Ascending aorta (tissue), 2 donors: ENCODE measurements at regions of chr17 and their contacts with region 1.

Region 1: DNA sequence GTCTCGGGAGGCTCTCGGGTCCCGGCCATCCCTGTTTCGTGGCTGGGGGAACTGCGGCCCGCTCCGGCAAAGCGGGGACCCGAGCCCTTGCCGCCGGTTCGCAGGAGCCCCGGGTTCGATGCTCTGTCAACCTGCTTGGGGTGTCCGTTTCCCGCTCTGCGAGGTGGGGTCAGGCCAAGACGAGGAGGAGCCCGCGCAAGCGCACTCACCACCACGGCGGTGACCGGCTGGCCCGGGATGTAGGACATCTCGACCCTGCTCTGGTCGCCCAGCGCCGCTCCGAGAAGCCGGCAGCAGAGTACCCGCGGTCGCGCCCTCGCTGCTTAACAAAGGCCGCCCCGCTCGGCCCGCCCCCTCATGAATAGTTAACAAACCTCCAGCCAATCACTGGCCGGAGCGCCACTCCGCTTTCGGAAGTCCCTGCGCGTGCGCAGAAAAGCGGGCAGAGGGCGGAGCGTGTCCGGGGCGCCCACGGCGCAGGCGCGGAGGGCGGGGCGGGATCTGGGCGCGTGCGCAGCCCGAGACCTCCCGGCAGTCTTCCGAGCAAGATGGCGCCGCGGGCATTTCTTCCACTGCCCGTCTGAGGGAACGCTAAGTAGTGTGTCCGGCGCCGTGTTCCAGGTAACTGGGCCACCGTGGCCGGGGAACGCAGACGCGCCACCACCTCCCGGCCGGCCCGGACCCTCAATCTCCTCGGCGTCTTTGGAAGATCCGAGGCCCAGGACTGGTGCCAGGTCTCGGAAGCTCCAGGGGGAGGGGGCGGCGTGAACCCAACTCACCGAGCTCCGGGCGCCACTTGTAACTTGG is at the starts of genes EMC6 and TAX1BP3:
- DNase-seq: peak; percentile 93 to 99
- H3K4me3 ChIP-seq: peak within 1 kb of the TSS; percentile 86 to 99
- H3K27ac ChIP-seq: peak within 1 kb of the TSS; percentile 97 to 98
- H3K4me1 ChIP-seq: peaks cover 12 to 16% of the 10 kb centered on the region in 2 donors
- H3K27me3 ChIP-seq: no peaks in the 10 kb centered on the region
- CTCF ChIP-seq: no peak
- total RNA-seq, gene EMC6: 75.0 TPM
- total RNA-seq, gene TAX1BP3: 165 TPM

Region 2: DNA sequence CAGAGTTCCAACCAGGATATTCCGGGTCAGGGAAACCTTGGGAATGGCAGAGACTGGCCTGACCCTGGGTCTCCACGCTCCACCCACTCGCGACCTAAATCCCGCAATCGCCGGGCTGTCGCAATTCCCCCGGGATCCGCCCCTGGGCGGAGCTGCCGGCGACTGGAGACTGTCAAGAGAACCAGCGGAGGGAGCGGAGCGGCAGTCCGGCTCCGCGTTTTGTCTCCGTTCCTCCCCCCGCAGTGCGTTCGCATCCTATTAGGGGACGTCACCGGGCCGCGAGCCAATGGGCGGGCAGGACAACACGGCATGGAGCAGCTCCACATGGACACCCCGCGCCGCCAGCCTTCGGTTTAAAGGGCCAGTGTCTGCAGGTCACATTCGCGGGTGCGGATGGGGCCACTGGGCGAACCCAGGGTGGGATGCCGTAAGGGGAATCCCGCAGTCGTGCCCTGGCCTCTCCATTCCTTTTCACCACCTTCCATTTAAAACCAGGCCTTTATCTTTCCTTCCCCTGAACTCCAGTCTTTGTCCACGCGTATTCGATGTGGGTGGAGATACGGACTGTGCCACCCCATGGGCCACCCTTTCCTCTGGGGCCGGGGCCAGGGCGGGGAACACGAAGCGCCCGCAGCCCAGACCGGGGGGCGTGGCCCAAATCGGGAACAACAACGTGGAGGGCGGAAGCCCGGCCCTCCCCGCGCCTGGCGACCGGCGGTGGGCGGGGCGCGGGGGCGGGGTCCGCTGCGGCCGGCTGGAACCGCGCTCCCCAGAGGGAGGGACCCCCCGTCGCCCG is 1266.9 kb before region 1 on chr17:
- intact Hi-C with region 1: loop called (anchors 10 kb)
- DNase-seq: peak; percentile 100
- H3K4me3 ChIP-seq: peak overlapping the region; percentile 84 to 86
- H3K27ac ChIP-seq: peak overlapping the region; percentile 97 to 98
- H3K4me1 ChIP-seq: peaks cover 26 to 60% of the 10 kb centered on the region in 2 donors
- H3K27me3 ChIP-seq: no peaks in the 10 kb centered on the region
- CTCF ChIP-seq: no peak

Region 3: DNA sequence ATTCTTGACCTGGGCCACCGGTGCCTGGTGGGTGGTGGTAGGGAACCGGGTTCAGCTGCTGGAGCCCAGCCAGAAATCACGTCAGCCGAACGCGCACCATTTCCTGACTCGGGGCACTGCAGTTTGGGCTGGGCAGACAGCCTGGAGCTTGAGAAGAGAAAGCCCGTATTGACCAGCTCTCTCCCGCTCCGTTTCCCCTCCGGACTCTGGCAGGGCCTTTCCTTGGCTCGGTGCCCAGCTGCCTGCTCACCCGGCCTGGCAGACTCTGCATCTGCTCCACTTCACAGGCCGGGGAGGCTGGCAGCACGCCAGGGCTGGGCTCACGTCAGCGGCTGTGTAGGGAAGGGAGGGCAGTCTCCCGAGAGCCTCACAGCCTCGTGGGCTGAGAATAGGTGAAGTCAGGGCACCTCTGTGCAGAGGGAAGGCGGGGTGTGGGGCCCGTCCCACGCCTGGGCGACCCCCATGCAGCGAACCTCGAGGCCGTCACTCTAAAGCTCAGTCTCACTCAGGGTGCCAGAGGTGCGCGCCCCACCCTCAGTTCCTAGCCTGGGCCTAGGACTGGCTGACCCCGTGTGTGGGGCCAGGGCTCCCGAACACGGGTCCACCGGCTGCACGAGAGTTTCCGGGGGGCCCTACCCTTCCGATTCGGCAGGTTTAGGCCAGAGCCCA is 664.2 kb before region 1 on chr17:
- intact Hi-C with region 1: loop called (anchors 10 kb)
- DNase-seq: peak; percentile 99
- H3K4me3 ChIP-seq: peak overlapping the region; percentile 7 to 49
- H3K27ac ChIP-seq: peak overlapping the region; percentile 88 to 95
- H3K4me1 ChIP-seq: peaks cover 10 to 11% of the 10 kb centered on the region in 2 donors
- H3K27me3 ChIP-seq: no peaks in the 10 kb centered on the region
- CTCF ChIP-seq: no peak

Region 4: GRCh38 chr17:3602499-3602898 is 66.0 kb before region 1 on chr17:
- intact Hi-C with region 1: no loop called
- DNase-seq: no peak
- H3K4me3 ChIP-seq: no peak overlapping the region
- H3K27ac ChIP-seq: no peak overlapping the region
- H3K4me1 ChIP-seq: no peaks in the 10 kb centered on the region
- H3K27me3 ChIP-seq: no peaks in the 10 kb centered on the region
- CTCF ChIP-seq: peak in 2 of 3 experiments; percentile 22 to 39

Region 5: DNA sequence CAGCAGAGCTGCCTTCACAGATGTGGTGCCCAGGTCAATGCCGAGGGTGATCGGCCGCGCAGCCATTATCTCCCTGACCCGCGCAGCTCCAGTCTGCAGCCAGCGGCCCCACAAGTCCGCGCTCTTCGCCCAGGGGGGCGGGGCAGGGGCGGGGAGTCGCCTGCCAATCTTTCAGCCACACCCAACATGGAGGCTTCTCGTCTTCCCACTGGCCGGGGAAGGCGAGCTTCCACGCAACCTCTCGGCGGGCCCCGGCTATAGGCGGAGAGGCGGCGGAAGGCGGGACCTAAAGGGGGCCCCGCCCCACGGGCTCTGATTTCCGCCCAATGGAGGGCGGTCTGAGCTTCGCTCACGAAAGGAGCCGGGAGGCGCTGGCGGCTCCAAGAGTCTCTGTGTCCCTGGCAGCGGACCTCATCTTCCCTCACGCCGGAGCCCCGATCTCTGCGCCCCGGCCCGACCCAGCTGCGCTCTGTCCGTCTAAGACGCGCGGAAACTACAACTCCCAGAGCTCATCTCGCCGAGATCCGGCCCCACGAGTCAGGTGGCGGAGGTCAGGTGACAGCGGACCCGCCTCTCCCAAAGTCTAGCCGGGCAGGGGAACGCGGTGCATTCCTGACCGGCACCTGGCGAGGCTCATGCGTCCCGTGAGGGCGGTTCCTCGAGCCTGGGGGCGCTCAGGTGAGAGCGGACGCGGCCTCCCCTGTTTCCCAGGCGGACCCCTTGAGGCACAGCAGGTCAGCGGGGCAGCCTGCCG is 32.2 kb before region 1 on chr17 and contains the starts of genes CTNS and SHPK:
- intact Hi-C with region 1: loop called (anchors 1 kb)
- DNase-seq: peak; percentile 90 to 98
- H3K4me3 ChIP-seq: peak within 1 kb of the TSS; percentile 84 to 85
- H3K27ac ChIP-seq: peak within 1 kb of the TSS; percentile 92 to 96
- H3K4me1 ChIP-seq: peaks cover 11 to 15% of the 10 kb centered on the region in 2 donors
- H3K27me3 ChIP-seq: no peaks in the 10 kb centered on the region
- CTCF ChIP-seq: no peak
- total RNA-seq, gene CTNS: 16.7 TPM
- total RNA-seq, gene SHPK: 0.32 TPM

Region 6: DNA sequence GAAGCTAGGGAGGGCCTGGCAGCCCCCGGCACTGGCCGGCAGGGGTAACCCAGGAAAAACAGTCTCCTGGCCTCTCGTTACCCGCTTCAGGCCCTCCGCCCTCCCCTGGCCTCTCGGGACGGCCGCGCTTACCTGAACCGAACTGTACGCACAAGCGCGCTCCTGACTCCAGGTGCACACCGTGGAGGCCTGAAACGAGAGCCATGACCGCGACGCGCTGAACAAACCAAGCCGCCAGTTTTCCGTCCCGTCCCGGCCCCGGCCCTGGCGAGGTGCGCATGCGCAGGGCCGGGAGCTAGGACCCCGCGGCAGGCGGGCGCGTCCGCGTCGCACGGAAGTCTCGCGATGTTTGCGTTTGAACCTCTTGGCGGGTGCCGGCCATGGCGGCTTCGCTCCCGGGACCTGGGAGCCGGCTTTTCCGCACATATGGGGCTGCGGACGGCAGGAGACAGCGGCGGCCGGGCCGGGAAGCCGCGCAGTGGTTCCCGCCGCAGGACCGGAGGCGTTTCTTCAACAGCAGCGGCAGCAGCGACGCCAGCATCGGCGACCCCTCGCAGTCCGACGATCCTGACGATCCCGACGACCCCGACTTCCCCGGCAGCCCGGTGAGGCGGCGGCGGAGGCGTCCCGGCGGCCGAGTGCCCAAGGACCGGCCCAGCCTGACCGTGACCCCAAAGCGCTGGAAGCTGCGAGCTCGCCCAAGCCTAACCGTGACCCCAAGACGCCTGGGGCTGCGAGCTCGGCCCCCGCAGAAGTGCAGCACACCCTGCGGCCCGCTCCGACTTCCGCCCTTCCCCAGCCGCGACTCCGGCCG is 55.3 kb after region 1 on chr17 and contains the start of gene HASPIN:
- intact Hi-C with region 1: loop called (anchors 1 kb)
- DNase-seq: peak; percentile 45 to 91
- H3K4me3 ChIP-seq: peak within 1 kb of the TSS; percentile 58 to 77
- H3K27ac ChIP-seq: peak within 1 kb of the TSS; percentile 72 to 75
- H3K4me1 ChIP-seq: peaks cover 7 to 11% of the 10 kb centered on the region in 2 donors
- H3K27me3 ChIP-seq: no peaks in the 10 kb centered on the region
- CTCF ChIP-seq: peak; percentile 8 to 37 (median 17)
- total RNA-seq, gene HASPIN: 2.7 TPM

Region 7: GRCh38 chr17:3845621-3846441 is 177.3 kb after region 1 on chr17 and contains the start of gene NCBP3:
- intact Hi-C with region 1: loop called (anchors 10 kb)
- DNase-seq: peak; percentile 54 to 93
- H3K4me3 ChIP-seq: peak within 1 kb of the TSS; percentile 96 to 99
- H3K27ac ChIP-seq: peak within 1 kb of the TSS; percentile 87 to 92
- H3K4me1 ChIP-seq: peaks cover 0 to 11% of the 10 kb centered on the region in 2 donors
- H3K27me3 ChIP-seq: no peaks in the 10 kb centered on the region
- CTCF ChIP-seq: peak; percentile 96 to 98 (median 97)
- total RNA-seq, gene NCBP3: 3.9 TPM